ENCODE measurements at regions of chr10 and their contacts with region 1.

Region 1: GRCh38 chr10:127990846-127991542 is 84.1 kb downstream of the PTPRE start:
- DNase-seq: peak in 1 of 2 donors; percentile 65
- H3K4me3 ChIP-seq: no peak overlapping the region
- H3K27ac ChIP-seq: peak overlapping the region; percentile 67 to 71
- H3K4me1 ChIP-seq: peaks cover 8 to 21% of the 10 kb centered on the region in 2 donors
- H3K27me3 ChIP-seq: no peaks in the 10 kb centered on the region
- CTCF ChIP-seq: no peak

Region 2: DNA sequence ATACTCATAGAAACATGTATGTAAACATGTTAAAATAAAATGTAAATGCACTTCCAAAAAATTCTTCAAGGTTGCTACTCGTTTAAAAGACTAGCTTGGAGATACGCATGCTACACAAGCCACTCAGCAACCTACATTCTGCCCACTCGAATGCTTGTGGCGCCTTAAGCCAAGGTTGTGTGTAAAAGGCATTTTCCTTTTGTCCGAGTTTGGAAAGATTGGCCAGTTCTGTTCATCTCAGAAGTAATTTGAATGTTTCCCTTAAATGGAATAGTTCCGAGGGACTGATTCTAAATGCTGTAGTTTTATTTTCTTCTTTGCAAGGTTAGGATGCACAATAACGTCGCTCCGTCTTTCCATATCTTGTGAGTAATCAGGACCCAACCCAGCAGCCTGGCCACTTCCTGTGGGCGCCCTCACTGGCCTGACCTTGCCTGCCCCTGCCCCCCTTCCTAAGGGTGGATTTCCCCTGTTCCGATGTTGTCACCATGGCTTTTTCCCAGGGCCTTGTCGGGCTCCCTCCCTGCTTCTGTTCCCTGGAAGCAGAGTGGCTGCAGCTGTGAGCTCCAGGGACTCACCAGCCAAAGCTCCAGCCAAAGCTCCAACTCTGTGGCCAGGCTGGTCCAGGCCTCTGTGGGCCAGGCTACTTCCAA is 13.5 kb before region 1 on chr10:
- intact Hi-C with region 1: loop called (anchors 2 kb)
- DNase-seq: peak; percentile 54 to 91
- H3K4me3 ChIP-seq: peak overlapping the region; percentile 41 to 53
- H3K27ac ChIP-seq: peak overlapping the region; percentile 74 to 75
- H3K4me1 ChIP-seq: peaks cover 7 to 17% of the 10 kb centered on the region in 2 donors
- H3K27me3 ChIP-seq: no peaks in the 10 kb centered on the region
- CTCF ChIP-seq: no peak